Right ventricle myocardium superior (tissue), 1 donor: ENCODE measurements at regions of chr11 and their contacts with region 1.

Region 1: DNA sequence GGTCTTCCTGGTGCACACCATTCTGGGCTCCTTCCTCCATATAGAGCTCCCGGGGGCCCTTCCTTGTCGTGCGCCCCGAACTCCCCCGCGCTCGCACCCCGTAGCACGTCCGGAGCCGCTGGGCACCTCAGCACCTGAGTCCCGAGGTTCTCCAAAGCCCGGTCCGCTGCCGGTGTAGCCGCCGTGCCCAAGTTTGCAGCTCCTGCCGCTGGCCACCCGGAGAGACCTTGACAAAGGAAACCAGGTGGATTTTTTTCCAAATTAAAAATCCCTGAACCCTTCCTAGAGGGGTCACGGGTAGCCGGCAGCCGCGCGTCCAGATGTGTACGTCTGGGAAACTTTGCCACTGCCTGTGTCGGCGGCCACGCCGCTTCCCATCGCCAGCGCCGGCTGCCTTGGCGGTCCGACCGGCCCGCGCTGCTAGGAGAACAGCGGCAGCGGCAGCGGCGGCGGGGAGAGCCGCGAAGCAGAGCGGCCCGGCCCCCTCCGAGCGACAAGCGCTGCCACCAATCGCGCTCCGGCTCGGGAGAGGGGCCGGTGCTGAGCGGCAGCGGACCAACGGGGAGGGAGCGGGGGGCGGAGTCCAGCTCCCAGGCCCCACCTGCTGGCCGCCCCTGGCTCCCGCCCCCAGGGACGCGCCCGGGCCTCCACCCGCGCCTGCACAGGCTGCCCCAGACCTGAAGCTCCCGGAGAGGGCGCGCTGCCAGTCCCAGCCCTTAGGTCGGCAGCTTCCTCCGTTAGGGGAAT is at the start of gene GALNT18:
- DNase-seq: peak; percentile 94
- ATAC-seq: peak; percentile 97
- total RNA-seq, gene GALNT18: 24.5 TPM

Region 2: DNA sequence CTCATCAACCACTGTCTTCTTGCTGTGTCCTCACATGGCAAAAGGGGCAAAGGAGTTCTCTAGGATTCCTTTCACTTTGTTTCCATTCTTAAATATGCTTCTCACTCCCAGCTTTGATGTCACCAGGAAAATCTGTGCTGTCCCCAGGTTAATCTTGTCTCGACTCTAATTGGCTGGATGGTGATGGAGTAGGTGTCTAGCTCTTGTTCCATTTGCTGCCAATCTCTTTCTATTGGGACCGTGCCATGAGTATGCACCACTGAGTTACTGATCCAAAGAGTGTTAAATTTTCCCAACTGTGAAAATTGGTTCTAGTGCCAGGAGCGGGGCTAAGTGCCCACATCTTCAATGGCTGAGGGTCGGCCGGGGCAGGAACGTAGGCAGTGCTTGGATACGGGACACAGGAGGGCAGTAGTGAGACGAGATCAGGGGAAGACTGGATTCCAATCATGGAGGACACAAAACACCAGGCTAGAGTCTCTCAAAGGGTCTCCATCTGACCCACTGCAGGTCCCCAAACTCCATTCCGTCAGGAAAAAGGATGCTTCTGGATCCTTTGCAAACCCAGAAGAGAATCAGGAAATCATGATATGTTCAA is 221.0 kb before region 1 on chr11:
- intact Hi-C with region 1: loop called (anchors 5 kb)
- DNase-seq: no peak
- ATAC-seq: no peak

Region 3: GRCh38 chr11:11538277-11538960 is 83.3 kb before region 1 on chr11:
- intact Hi-C with region 1: loop called (anchors 5 kb)
- DNase-seq: peak; percentile 82
- ATAC-seq: peak; percentile 85

Region 4: DNA sequence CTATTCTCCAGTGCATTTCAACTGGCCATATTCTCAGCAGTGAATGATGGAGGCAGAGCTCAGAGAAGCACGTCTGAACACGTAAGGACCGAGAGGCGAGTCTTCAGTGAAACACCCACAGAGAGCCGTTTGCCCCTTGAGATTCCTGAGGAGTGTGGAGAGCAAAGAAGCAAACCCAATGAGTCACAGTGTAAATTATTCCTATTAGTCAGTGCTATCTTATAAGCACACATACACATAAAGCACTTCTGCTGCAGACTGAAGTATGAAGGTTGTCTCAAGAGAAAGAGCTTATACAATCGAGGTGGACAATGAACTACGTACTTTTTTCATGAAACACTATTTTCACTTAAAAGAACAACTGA is 37.3 kb before region 1 on chr11:
- intact Hi-C with region 1: loop called (anchors 5 kb)
- DNase-seq: no peak
- ATAC-seq: no peak